Psoas muscle (tissue), 8 donors: ENCODE measurements at regions of chr4 and their contacts with region 1.

Region 1: GRCh38 chr4:118948545-118949144 is 60.0 kb downstream of the SYNPO2 start:
- DNase-seq: no peak
- ATAC-seq: peak in 2 of 4 donors; percentile 53 to 54
- H3K4me3 ChIP-seq: no peak overlapping the region
- H3K27ac ChIP-seq: peak overlapping the region; percentile 39
- H3K4me1 ChIP-seq: peaks cover 25% of the 10 kb centered on the region
- H3K27me3 ChIP-seq: no peaks in the 10 kb centered on the region
- CTCF ChIP-seq: no peak

Region 2: DNA sequence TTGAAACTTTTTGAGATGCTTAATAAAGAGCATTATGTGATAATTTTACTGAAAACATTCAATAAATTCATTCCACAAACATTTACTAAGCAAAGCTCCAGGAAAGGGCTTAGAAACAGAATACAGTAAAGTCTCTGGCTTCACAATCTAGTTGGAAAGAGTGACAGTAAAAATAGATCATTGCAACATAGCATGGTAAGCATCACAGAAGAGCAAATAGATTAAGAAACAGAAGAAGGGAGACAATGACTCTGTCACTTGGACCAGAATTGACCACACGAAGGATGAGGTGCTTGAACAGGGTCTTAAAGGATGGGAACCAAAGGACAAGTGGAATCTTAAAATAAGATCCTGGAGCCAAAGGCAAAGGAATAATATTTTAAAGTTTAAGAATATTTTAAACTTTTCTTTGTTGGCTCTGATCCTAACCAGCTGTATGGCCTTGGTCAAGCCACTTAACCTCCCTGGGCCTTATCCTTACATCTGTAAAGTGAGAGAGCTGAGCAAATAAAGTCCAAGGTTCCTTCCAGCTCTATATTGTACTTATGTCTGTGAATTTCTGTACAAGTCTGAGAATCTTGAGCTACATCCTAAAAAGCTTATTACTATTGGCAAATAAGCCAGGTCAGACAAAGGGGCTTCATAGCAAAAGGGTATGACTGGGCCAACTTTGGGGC is 146.6 kb before region 1 on chr4:
- intact Hi-C with region 1: no loop called
- DNase-seq: no peak
- ATAC-seq: peak; percentile 72 to 95 (median 86)
- H3K4me3 ChIP-seq: no peak overlapping the region
- H3K27ac ChIP-seq: no peak overlapping the region
- H3K4me1 ChIP-seq: no peaks in the 10 kb centered on the region
- H3K27me3 ChIP-seq: no peaks in the 10 kb centered on the region
- CTCF ChIP-seq: no peak

Region 3: DNA sequence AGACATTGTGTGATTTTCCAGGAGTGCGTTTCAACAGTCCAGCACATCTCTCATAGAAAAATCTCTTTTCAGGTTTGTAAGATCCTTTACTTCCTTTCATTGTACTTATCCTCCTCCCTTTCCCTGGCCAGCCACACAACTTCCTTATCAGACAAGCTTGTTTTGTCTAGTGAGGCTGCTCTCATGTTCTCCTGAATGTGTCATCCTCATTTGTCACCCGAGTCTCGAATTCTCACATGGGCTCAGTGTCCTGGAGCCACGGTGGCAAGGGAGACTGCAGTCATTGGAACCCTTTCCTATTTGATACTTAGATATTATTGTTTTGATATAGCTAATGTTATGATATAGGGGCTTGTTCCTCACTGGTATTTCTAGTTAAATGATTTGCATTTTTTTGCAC is 43.1 kb before region 1 on chr4:
- intact Hi-C with region 1: loop called in 1 of 2 experiments (anchors 5 kb)
- DNase-seq: peak in 1 of 2 donors; percentile 53
- ATAC-seq: peak; percentile 74 to 90 (median 86)
- H3K4me3 ChIP-seq: no peak overlapping the region
- H3K27ac ChIP-seq: peak overlapping the region; percentile 72
- H3K4me1 ChIP-seq: peaks cover 32% of the 10 kb centered on the region
- H3K27me3 ChIP-seq: no peaks in the 10 kb centered on the region
- CTCF ChIP-seq: no peak

Region 4: GRCh38 chr4:118927974-118928373 is 20.7 kb before region 1 on chr4:
- intact Hi-C with region 1: no loop called
- DNase-seq: no peak
- ATAC-seq: peak in 2 of 4 donors; percentile 50 to 66
- H3K4me3 ChIP-seq: no peak overlapping the region
- H3K27ac ChIP-seq: no peak overlapping the region
- H3K4me1 ChIP-seq: peaks cover 17% of the 10 kb centered on the region
- H3K27me3 ChIP-seq: no peaks in the 10 kb centered on the region
- CTCF ChIP-seq: no peak

Region 5: GRCh38 chr4:119010909-119011606 is 62.4 kb after region 1 on chr4:
- intact Hi-C with region 1: no loop called
- DNase-seq: peak; percentile 69 to 87
- ATAC-seq: peak; percentile 90 to 96 (median 94)
- H3K4me3 ChIP-seq: peak overlapping the region; percentile 35
- H3K27ac ChIP-seq: peak overlapping the region; percentile 94
- H3K4me1 ChIP-seq: peaks cover 52% of the 10 kb centered on the region
- H3K27me3 ChIP-seq: no peaks in the 10 kb centered on the region
- CTCF ChIP-seq: no peak